ENCODE measurements at regions of chr20 and their contacts with region 1.

Region 1: DNA sequence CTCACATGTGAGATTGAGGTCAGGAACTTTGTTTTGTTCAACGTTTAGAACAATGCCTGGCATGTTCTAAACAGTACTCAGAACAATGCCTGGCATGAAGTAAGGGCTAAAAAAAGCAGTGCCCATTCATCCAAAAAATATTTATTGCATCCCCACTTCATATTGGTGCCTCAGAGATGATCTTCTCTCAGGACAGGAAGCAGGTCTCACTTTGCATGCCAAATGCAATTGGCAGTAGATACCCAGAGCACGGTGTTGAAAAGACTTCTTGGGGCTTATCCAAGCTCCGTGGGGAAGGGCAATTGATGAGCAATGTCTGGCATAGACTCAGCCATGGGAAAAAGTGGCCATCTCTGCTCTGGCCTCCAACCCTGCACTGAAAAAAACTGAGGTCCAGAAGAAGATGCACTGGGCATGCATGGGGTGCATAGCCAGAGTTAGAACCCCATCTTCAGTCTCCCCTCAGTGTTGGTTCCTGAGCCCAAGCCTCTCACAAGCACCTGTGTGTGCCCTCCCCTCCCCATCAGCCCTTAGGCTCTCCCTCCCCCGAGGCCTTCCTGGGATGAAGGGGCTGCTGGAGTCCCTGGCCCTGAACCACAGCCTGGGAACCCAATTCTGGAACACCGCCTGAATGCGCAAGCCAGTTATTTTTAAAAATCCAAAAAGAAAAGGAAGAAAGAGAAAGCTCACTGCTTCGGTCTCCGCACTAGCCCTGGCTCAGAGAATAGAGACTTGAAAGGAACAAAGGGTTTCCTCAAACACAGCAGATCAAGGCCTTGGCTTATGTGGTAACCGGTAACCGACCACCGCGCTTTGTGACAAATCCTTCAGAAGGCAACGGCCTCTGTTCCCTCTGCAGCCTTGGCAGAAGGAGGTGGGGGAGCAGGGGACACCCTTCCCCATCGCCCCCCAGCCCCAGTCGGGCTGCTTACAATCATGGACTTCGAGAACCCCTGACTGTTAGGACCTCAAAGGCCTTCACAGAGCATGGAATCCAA is 78.5 kb upstream of the SIRPA start:
- DNase-seq: no peak
- ATAC-seq: peak; percentile 76

Region 2: DNA sequence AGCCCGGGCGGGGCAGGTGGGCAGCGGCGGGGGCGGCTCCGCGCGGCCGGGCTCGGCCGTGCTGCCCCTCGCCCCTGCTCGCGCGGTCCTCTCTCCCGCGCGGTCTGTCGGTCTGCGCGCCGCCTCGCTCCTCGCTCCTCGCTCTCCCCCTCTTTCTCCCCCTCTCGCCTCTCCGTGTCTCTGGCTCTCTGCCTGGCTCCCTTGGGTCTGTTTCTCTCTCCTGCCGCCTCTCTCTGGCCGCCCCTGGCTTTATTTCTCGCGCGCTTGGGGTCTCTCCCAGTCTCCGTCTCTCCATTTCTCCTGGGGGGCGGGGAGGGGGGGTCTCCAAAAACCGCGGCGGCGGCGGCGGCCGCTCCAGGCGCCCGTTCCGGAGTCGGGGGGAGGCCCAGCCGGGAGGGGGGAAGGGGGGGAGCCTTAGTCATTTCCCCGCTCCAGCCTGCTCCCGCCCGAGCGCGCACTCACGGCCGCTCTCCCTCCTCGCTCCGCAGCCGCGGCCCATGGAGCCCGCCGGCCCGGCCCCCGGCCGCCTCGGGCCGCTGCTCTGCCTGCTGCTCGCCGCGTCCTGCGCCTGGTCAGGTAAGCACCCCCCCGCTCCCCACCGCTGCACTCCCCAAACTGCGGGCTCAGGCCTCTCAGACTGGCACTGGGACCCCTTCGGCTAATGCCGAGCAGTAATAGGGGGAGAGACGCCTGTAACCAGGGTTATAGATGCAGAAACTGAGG is 78.4 kb after region 1 on chr20 and contains the start of gene SIRPA:
- intact Hi-C with region 1: loop called (anchors 5 kb)
- DNase-seq: peak; percentile 83
- ATAC-seq: peak; percentile 61
- total RNA-seq, gene SIRPA: 20.9 TPM